Activated CD4-positive, alpha-beta memory T cell treated with anti-CD3 and anti-CD28 coated beads for 36 hours (primary cell): ENCODE measurements at regions of chr20 and their contacts with region 1.

Region 1: DNA sequence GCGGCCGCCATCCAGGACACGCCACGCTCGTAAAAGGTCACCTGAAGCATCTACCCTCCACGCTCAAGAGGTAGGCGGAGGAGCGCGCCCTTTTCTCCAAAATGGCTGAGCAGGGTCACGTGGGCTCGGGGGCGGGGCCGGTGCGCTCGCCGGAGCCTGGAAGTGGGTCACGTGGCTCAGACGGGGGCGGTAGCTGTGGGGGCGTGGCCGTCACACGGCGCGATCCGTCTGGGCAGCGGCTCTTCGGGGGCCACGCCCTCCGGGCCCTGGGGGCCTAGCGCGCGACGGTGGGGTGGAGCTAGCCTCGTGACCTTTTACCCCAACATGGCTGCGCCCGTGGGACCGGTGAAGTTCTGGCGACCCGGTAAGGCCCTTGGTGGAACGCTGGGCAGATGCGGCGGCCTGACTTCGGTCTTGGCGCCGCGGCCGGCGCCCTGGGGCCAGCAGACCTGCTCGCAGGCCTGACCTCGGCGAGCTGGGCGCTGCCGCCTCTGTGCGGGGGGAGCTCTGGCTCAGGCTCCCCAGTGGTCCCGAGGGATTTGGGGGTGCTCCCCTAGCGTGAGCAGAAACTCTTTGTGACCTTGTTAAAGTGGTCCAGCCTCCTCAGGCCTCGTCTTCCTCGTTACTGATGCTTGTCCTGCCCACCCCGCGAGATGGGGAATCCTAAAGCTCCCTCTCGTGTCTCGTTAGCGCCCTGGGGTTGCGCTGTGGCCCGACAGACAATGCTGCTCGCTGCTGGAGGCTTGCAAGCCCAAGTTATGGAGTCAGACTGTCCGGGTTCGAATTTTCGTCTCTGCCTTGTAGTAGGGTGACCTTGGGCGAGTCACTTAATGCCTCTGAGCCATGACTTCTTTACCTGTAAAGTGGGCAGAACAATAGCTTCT is at the start of gene DHX35:
- DNase-seq: peak; percentile 99
- H3K4me3 Mint-ChIP-seq: peak within 1 kb of the TSS; percentile 93
- H3K27ac Mint-ChIP-seq: peak within 1 kb of the TSS; percentile 91
- H3K4me1 Mint-ChIP-seq: peaks cover 24% of the 10 kb centered on the region
- H3K27me3 Mint-ChIP-seq: no peaks in the 10 kb centered on the region
- total RNA-seq, gene DHX35: 7.7 to 8.3 TPM

Region 2: DNA sequence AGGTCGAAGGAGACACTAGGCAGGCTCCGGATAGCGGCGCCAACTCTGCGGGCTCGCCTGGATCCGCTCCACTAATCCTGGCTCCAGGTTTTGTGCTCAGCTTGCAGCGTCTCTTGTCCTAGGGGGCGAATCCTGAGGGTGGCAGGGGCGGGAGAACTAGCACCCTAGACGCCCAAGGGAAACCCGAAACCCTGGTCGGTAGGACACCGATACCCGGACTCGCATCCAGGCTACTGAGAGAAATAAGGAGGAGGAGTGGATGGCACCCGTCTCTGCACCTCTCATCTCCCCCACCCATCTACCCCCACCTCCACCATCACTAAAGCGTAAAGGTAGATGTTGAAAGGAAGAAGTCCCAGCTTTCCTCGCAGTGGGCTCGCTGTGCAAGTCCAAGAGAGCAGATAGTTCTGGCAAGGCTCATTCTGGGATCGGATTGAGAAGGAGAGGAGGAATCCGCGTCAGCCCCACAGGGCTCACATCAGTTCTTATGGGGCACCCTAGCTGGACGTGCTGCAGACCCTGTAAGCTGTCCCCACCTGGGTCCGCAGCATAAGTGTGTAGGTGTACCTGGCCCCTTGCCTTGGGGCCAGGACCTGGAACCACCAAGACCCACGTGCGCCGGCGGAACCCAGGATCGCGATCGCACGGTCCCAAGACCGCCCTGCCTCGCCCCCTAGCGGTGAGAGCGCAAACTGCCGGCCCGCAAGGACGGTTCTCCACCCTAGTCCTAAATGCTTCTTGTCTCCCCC is 231.1 kb before region 1 on chr20:
- CTCF ChIA-PET with region 1: no interaction called
- POLR2A ChIA-PET with region 1: no interaction called
- intact Hi-C with region 1: loop called (anchors 5 kb)
- DNase-seq: peak; percentile 85
- H3K4me3 Mint-ChIP-seq: peak overlapping the region; percentile 58
- H3K27ac Mint-ChIP-seq: peak overlapping the region; percentile 52
- H3K4me1 Mint-ChIP-seq: peaks cover 42% of the 10 kb centered on the region
- H3K27me3 Mint-ChIP-seq: peaks cover 85% of the 10 kb centered on the region

Region 3: DNA sequence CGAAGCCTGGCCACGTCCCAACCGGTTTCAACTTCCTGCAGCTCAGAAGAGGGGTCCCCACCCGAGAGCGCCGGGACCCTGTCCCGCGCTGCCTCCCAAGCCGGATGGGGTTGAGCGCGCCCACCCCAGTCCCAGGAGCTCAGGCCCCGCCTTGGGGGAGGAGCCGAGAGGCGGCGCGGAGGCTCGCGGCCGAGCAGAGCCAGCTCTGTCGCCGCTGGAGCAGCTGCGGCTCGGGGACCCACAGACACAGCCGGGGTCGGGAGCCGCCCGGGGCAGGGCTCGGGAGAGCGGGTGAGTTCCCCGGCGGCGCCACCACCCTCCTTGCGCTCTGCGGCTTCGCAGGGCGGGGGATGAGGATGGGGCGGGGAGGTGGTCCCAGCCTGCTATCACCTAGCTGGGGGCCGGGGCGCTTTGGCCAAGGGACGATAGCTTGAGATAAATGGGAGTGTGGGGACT is 156.8 kb before region 1 on chr20 and contains the start of gene PPP1R16B:
- CTCF ChIA-PET with region 1: no interaction called
- POLR2A ChIA-PET with region 1: no interaction called
- intact Hi-C with region 1: loop called (anchors 5 kb)
- DNase-seq: peak; percentile 85
- H3K4me3 Mint-ChIP-seq: peak within 1 kb of the TSS; percentile 86
- H3K27ac Mint-ChIP-seq: peak within 1 kb of the TSS; percentile 96
- H3K4me1 Mint-ChIP-seq: peaks cover 51% of the 10 kb centered on the region
- H3K27me3 Mint-ChIP-seq: no peaks in the 10 kb centered on the region
- total RNA-seq, gene PPP1R16B: 111 to 114 TPM

Region 4: GRCh38 chr20:38875175-38875993 is 86.9 kb before region 1 on chr20:
- CTCF ChIA-PET with region 1: interaction called, 3 read pairs
- POLR2A ChIA-PET with region 1: interaction called, 3 read pairs
- intact Hi-C with region 1: loop called (anchors 2 kb)
- DNase-seq: peak; percentile 73
- H3K4me3 Mint-ChIP-seq: peak overlapping the region; percentile 69
- H3K27ac Mint-ChIP-seq: peak overlapping the region; percentile 94
- H3K4me1 Mint-ChIP-seq: peaks cover 88% of the 10 kb centered on the region
- H3K27me3 Mint-ChIP-seq: no peaks in the 10 kb centered on the region

Region 5: DNA sequence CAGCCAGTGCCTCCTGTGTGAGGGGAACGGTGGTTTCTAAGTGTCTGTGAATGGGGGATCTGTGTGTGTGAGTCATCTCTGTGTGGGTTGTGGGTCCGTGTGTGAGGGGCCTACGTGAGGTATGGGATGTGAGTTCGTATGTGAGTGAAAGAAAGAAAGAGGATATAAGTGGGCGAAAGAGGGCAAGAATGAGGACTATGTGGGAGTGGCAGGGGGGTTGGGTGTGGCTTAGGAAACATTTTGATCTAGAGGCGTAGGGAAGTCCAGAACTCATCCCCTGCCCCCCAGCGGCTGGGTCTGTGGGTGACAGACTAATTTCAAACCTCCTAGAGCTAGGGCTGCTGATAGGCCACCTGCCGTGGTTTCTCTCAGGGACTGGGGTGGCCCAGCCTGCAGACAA is 35.3 kb after region 1 on chr20:
- CTCF ChIA-PET with region 1: interaction called, 5 read pairs
- POLR2A ChIA-PET with region 1: interaction called, 10 read pairs
- intact Hi-C with region 1: loop called (anchors 2 kb)
- DNase-seq: peak; percentile 83
- H3K4me3 Mint-ChIP-seq: no peak overlapping the region
- H3K27ac Mint-ChIP-seq: peak overlapping the region; percentile 9
- H3K4me1 Mint-ChIP-seq: peaks cover 22% of the 10 kb centered on the region
- H3K27me3 Mint-ChIP-seq: no peaks in the 10 kb centered on the region

Region 6: GRCh38 chr20:39019805-39020325 is 57.6 kb after region 1 on chr20:
- CTCF ChIA-PET with region 1: interaction called, 3 read pairs
- POLR2A ChIA-PET with region 1: interaction called, 4 read pairs
- intact Hi-C with region 1: loop called (anchors 1 kb)
- DNase-seq: peak; percentile 72
- H3K4me3 Mint-ChIP-seq: no peak overlapping the region
- H3K27ac Mint-ChIP-seq: no peak overlapping the region
- H3K4me1 Mint-ChIP-seq: peaks cover 59% of the 10 kb centered on the region
- H3K27me3 Mint-ChIP-seq: no peaks in the 10 kb centered on the region

Region 7: DNA sequence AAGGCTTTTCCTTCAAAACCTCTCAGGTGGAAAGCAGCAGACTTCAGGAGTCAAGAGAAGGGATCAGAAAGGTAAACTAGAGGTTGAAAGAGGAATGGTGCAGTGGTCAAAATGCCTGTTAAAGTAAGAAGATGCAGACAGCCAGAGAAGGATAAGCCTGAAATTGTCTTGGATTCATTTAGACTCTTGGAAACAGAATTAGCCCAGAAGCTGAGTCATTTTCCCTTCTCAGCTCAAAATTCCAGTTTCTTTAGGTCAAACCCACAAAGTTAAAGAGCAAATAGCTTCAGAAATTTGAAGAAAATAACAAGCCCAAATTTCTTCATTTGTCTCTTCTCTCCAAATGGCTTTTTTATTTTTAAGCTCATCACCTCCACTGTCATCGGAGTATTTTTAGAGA is 73.7 kb after region 1 on chr20:
- CTCF ChIA-PET with region 1: no interaction called
- POLR2A ChIA-PET with region 1: no interaction called
- intact Hi-C with region 1: no loop called
- DNase-seq: no peak
- H3K4me3 Mint-ChIP-seq: no peak overlapping the region
- H3K27ac Mint-ChIP-seq: no peak overlapping the region
- H3K4me1 Mint-ChIP-seq: no peaks in the 10 kb centered on the region
- H3K27me3 Mint-ChIP-seq: no peaks in the 10 kb centered on the region

Region 8: DNA sequence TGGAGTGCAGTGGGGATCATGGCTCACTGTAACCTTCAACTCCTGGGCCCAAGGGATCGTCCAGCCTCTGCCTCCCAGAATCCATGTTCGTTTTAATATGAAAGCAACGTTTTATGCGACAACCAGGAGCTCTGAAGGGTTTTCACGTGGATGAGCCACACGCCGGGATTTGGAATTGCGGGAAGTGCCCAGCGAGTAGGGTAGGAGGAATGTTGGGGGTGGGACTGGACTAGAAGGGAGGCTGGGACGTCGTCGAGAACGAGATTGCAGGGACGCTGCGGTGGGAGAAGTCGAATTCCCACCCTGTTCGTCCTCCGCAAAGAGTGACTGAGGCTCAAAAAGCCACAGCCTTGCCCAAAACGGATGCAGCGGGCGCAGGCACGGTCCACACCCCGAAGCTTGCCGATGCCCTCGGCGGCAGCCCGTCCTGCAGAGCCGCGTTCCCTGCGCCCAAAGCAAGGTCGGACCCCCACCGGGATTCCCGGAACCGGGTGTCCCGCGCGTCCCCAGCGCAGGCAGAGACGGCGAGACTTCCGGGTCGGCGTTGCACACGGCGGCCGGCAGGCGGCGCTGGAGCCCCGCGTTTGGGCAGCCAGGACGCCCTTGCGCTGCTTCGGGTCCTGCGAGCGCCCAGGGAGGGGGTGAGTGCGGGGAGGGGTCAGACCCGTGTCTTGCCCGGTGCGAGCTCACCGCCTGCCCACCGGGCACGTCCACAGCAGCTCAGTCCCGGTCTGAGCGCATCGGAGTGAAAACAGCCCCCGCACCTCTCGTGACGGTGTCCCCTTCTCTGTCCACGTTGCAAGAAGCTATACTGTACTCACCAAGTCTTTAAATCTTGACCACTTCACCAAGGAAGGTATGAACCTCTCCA is 87.6 kb after region 1 on chr20:
- CTCF ChIA-PET with region 1: interaction called, 42 read pairs
- POLR2A ChIA-PET with region 1: interaction called, 11 read pairs
- intact Hi-C with region 1: no loop called
- DNase-seq: peak; percentile 82
- H3K4me3 Mint-ChIP-seq: peak overlapping the region; percentile 80
- H3K27ac Mint-ChIP-seq: no peak overlapping the region
- H3K4me1 Mint-ChIP-seq: peaks cover 7% of the 10 kb centered on the region
- H3K27me3 Mint-ChIP-seq: peaks cover 1% of the 10 kb centered on the region